Panc1 (cell line): ENCODE measurements at regions of chr4 and their contacts with region 1.

Region 1: DNA sequence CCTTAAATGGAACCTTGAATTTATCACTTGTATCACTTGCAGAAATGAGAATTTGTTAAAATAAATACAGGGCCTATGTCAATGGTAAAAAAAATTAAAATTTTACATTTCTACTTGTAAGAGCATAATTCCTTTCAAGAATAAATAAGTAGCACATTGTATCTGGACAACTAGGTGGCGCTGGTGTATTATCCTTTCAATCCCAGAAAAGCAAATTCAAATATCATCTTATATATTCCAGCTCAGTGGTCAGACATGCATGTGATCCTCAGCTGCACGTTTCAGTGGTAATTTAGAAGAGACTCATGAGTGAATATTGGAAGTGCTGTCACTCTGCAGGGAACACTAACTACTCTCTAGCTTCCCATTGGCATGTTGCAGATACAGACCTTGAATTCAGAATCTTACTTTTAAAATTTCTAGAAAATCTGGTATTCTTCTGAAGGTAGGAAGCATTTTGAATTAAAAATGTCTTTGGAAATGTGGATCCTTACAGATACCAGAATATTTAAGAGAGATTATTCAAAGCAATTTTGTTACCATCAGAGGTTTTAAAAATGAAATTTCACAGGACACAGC is 1414.7 kb upstream of the TENM3 start:
- DNase-seq: peak; percentile 35
- ATAC-seq: no peak
- H3K4me3 ChIP-seq: no peak overlapping the region
- H3K27ac ChIP-seq: no peak overlapping the region
- H3K4me1 ChIP-seq: no peaks in the 10 kb centered on the region
- H3K27me3 ChIP-seq: no peaks in the 10 kb centered on the region
- CTCF ChIP-seq: peak; percentile 63; the same call in 1 of the 2 replicates

Region 2: DNA sequence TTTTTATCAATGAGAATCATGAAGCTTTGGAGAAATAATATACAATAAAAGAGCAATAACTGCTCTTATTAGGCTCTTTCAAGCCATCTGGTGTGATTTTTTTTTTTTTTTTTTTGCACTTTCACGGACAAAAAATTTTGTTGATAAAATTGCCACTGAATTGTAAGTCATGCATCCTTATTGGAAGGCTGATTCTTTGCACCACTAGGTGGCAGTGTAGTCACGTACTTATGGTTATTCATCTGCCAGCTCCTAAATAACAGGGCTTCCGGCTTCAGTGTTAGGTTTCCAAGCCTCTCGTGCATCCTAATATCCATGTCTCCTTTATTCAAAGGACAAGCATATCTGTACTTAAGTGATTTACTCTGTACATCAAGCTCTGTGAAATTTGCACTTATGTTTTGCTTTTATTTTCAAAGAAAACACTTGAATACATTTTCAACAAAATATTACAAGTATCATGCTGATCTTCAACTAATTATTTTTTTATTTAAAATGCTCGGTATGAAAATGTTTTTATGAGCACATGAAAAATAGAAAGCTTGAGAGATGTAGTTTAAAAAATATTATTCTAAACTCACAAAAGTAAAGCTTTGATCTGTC is 163.7 kb before region 1 on chr4:
- CTCF ChIA-PET with region 1: no interaction called
- POLR2A ChIA-PET with region 1: no interaction called
- in situ Hi-C with region 1: no loop called
- intact Hi-C with region 1: loop called (anchors 10 kb)
- DNase-seq: peak; percentile 47
- ATAC-seq: peak; percentile 71; the same call in 1 of the 2 replicates
- H3K4me3 ChIP-seq: no peak overlapping the region
- H3K27ac ChIP-seq: no peak overlapping the region
- H3K4me1 ChIP-seq: no peaks in the 10 kb centered on the region
- H3K27me3 ChIP-seq: no peaks in the 10 kb centered on the region
- CTCF ChIP-seq: peak; percentile 67

Region 3: GRCh38 chr4:180695851-180696250 is 132.7 kb before region 1 on chr4:
- CTCF ChIA-PET with region 1: no interaction called
- POLR2A ChIA-PET with region 1: no interaction called
- in situ Hi-C with region 1: no loop called
- intact Hi-C with region 1: no loop called
- DNase-seq: no peak
- ATAC-seq: no peak
- H3K4me3 ChIP-seq: no peak overlapping the region
- H3K27ac ChIP-seq: no peak overlapping the region
- H3K4me1 ChIP-seq: no peaks in the 10 kb centered on the region
- H3K27me3 ChIP-seq: no peaks in the 10 kb centered on the region
- CTCF ChIP-seq: no peak

Region 4: GRCh38 chr4:181143250-181143854 is 314.8 kb after region 1 on chr4:
- CTCF ChIA-PET with region 1: no interaction called
- POLR2A ChIA-PET with region 1: no interaction called
- in situ Hi-C with region 1: no loop called
- intact Hi-C with region 1: loop called (anchors 10 kb)
- DNase-seq: peak; percentile 39
- ATAC-seq: peak; percentile 85; the same call in 1 of the 2 replicates
- H3K4me3 ChIP-seq: no peak overlapping the region
- H3K27ac ChIP-seq: no peak overlapping the region
- H3K4me1 ChIP-seq: no peaks in the 10 kb centered on the region
- H3K27me3 ChIP-seq: no peaks in the 10 kb centered on the region
- CTCF ChIP-seq: peak; percentile 69